ENCODE measurements at regions of chr11 and their contacts with region 1.

Region 1: DNA sequence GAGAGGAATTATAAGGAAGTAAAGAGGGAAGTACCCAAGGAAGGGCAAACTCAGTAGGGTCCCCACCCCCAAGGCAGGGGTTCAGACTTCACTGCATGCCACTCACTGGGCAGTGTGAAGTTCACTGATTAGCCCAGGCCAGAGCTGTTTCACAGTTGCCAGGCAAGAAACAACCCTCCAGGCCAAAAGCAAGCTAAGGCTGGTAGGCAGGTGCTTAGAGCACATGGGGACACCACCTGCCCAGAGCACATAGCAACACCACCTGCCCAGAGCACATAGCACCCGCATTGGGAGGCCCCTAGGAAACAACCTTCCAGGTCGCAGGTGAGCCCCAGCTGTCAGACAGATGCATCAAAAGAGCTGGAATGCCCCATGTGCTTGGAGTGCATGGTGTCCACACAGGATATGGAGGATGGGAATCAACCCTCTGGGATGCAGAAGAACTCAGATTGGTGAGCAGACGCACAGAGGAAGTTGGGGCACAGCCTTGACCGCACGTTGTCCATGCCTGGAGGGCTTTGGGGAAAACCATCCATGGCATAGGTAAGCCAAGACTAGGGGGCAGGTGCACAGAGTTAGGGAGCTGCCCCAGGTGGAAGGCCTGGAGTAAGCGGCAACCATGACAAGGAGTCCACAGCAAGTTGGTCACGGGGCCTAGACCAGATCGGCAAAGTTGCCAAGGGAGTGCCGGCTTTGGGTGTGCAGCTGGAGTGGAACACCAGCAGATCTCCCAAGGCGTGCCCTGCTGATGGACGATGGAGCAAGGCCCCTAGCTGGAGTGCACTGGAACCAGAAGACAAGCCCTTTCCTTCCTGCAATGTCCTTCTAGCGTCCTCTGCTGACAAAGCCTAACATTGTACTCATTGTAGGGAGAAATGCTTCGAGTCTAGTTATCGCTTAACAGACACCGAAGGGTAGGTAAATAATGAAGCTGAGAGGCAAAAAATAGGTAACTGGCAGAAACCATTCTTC is 7.8 kb upstream of the TMEM216 start:
- DNase-seq: no peak
- ATAC-seq: peak; percentile 30

Region 2: GRCh38 chr11:60985991-60986915 is 398.3 kb before region 1 on chr11:
- intact Hi-C with region 1: no loop called
- DNase-seq: peak; percentile 55 to 66
- ATAC-seq: peak; percentile 92

Region 3: DNA sequence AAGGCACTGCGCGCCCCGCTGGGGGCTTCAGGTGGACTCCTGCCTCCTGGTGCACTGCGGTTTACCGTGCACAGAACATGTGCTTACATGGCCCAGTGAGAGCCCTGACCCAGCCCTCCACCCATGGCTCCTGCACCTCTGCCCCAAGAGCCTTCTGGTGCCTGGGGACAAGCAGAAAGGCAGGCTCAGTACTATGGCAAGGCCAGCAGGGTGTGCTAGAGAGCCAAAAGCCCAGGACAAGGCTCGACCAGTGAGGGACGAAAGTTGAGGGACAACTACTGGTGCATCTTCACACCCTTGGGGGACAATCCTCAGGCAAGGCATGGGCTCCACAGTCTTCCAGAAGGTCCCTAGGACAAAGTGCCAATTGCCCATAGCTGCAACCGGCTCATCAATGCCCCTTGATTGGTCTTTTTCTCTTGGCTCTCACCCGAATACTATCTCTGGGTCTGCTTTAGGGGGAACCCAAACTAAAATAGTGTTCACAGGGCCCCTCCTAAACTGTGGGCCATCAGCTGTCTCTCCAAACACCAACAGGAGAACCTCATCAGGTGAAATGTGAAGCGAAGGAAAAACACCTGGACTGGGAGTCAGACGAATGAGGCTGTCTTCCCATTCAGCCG is 130.0 kb before region 1 on chr11:
- intact Hi-C with region 1: loop called in 1 of 2 experiments (anchors 10 kb)
- DNase-seq: peak; percentile 38 to 57
- ATAC-seq: peak; percentile 95

Region 4: DNA sequence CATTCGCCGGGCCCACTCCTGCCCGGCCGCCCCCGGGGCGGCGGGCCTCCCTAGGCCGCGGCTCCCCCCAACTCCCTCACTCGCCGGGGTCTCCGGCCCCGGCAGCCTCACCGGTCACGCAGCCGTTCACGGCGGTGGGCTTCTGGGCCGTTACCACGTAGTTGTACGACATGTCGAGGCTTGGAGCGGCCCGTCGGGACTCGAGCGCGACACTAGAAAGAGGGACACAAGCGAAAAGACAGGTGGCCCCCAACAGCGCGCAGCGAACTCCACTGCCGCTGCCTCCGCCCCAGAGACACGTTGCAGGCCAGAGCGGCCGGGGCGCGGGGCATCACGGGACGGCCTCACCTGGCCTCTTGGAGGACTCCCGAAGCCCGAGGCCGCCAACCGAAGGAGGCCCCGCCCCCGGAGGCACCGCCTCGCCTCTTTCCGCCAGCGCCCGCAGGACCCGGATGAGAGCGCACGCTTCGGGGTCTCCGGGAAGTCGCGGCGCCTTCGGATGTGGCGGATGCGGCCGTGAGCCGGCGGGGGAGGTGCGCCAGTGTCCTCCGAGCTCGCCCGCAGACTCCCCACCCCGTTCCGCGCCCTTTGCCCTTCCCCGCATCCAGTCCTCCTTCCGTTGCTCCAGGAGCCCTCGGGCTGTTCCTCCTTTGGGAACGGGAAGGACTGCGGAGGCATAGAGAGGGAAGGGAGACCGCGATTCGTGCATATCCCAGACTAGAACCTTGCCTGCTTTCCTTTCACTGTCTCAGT is 51.6 kb before region 1 on chr11 and contains the starts of genes DDB1 and TKFC:
- intact Hi-C with region 1: loop called (anchors 5 to 10 kb)
- DNase-seq: peak; percentile 96 to 97
- ATAC-seq: peak; percentile 92
- total RNA-seq, gene DDB1: 138 to 149 TPM
- total RNA-seq, gene TKFC: 58.5 to 61.5 TPM